CD4-positive, alpha-beta T cell (primary cell): ENCODE measurements at regions of chr15 and their contacts with region 1.

Region 1: GRCh38 chr15:59917504-59918157 is 86.5 kb upstream of the FOXB1 start:
- DNase-seq: peak; percentile 47 to 79 (median 60)
- ATAC-seq: peak; percentile 80
- H3K4me3 ChIP-seq: no peak overlapping the region
- H3K4me3 Mint-ChIP-seq: no peak overlapping the region
- H3K27ac ChIP-seq: no peak overlapping the region
- H3K27ac Mint-ChIP-seq: no peak overlapping the region
- H3K4me1 ChIP-seq: peaks cover 19% of the 10 kb centered on the region
- H3K4me1 Mint-ChIP-seq: peaks cover 15% of the 10 kb centered on the region
- H3K27me3 ChIP-seq: no peaks in the 10 kb centered on the region
- H3K27me3 Mint-ChIP-seq: peaks cover 30% of the 10 kb centered on the region
- CTCF ChIP-seq: peak; percentile 68

Region 2: GRCh38 chr15:60179786-60180391 is 262.3 kb after region 1 on chr15:
- CTCF ChIA-PET with region 1: interaction called, 6 read pairs
- POLR2A ChIA-PET with region 1: interaction called, 3 read pairs
- intact Hi-C with region 1: loop called (anchors 1 to 2 kb)
- DNase-seq: peak in 11 of 14 experiments; percentile 2 to 72 (median 14)
- ATAC-seq: peak; percentile 64
- H3K4me3 ChIP-seq: no peak overlapping the region
- H3K4me3 Mint-ChIP-seq: no peak overlapping the region
- H3K27ac ChIP-seq: no peak overlapping the region
- H3K27ac Mint-ChIP-seq: no peak overlapping the region
- H3K4me1 ChIP-seq: no peaks in the 10 kb centered on the region
- H3K4me1 Mint-ChIP-seq: no peaks in the 10 kb centered on the region
- H3K27me3 ChIP-seq: no peaks in the 10 kb centered on the region
- H3K27me3 Mint-ChIP-seq: peaks cover 23% of the 10 kb centered on the region
- CTCF ChIP-seq: peak; percentile 99

Region 3: DNA sequence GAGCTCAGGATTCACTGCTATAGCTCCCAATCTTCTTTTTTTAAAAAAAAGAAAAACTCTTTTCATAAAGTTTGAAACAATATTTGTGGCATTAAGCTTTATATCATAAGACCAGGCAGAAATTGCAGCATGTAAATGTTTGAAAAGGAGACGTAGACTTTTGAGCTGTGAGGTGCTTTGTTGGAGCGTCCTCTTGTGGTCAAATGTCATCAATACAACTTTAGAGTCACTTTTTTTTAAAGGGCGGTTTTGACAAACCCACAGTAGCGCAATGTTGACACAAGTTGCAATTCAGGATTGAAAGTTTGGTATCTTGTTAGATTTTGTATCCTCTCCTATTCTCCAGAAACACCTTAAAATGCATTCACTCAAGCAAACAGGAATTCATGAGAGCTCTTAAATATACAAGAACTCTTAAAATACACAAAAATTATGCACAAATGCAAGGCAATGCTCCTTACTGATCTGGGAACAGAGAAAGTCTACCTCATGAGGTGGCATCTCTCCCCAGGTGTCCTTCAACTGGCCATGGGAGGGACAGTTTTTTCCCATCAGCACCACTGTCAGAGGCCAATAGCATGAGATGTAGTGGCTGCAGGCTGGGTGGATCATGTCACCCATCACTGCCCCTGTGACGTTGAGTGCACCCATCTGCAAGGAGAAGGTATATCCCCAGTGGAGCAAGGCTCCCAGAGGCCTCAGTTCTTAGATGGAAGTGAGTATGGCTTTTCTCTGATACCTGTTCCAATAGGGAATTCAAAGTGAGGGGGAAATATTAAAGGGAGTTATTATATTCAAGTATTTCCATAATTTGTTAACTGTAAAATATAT is 409.4 kb after region 1 on chr15:
- CTCF ChIA-PET with region 1: interaction called, 3 read pairs
- POLR2A ChIA-PET with region 1: no interaction called
- intact Hi-C with region 1: loop called (anchors 2 to 5 kb)
- DNase-seq: peak in 9 of 14 experiments; percentile 0 to 78 (median 8)
- ATAC-seq: peak; percentile 49
- H3K4me3 ChIP-seq: no peak overlapping the region
- H3K4me3 Mint-ChIP-seq: no peak overlapping the region
- H3K27ac ChIP-seq: no peak overlapping the region
- H3K27ac Mint-ChIP-seq: no peak overlapping the region
- H3K4me1 ChIP-seq: no peaks in the 10 kb centered on the region
- H3K4me1 Mint-ChIP-seq: peaks cover 6% of the 10 kb centered on the region
- H3K27me3 ChIP-seq: peaks cover 13 to 23% of the 10 kb centered on the region in 2 experiments
- H3K27me3 Mint-ChIP-seq: peaks cover 77% of the 10 kb centered on the region
- CTCF ChIP-seq: peak; percentile 69